Ovary (tissue), 10 donors: ENCODE measurements at regions of chr14 and their contacts with region 1.

Region 1: GRCh38 chr14:49915085-49915484 is 22.2 kb downstream of the ARF6 start:
- DNase-seq: no peak
- H3K4me3 ChIP-seq: no peak overlapping the region
- H3K27ac ChIP-seq: no peak overlapping the region
- H3K4me1 ChIP-seq: no peaks in the 10 kb centered on the region
- H3K27me3 ChIP-seq: no peaks in the 10 kb centered on the region
- CTCF ChIP-seq: no peak
- EP300 ChIP-seq: no peak
- POLR2A ChIP-seq: no peak

Region 2: GRCh38 chr14:49896966-49897365 is 18.1 kb before region 1 on chr14:
- intact Hi-C with region 1: no loop called
- DNase-seq: no peak
- H3K4me3 ChIP-seq: no peak overlapping the region
- H3K27ac ChIP-seq: no peak overlapping the region
- H3K4me1 ChIP-seq: peaks cover 3% of the 10 kb centered on the region
- H3K27me3 ChIP-seq: no peaks in the 10 kb centered on the region
- CTCF ChIP-seq: no peak
- EP300 ChIP-seq: no peak
- POLR2A ChIP-seq: no peak

Region 3: GRCh38 chr14:49971156-49972130 is 56.4 kb after region 1 on chr14:
- intact Hi-C with region 1: loop called in 1 of 4 experiments (anchors 10 kb)
- DNase-seq: no peak
- H3K4me3 ChIP-seq: no peak overlapping the region
- H3K27ac ChIP-seq: no peak overlapping the region
- H3K4me1 ChIP-seq: peaks cover 19% of the 10 kb centered on the region
- H3K27me3 ChIP-seq: no peaks in the 10 kb centered on the region
- CTCF ChIP-seq: no peak
- EP300 ChIP-seq: no peak
- POLR2A ChIP-seq: no peak